ENCODE measurements at regions of chr6 and their contacts with region 1.

Region 1: GRCh38 chr6:148250975-148251685 is 91.5 kb upstream of the SASH1 start:
- DNase-seq: peak; percentile 37
- ATAC-seq: peak; percentile 63
- H3K4me3 ChIP-seq: no peak overlapping the region
- H3K27ac ChIP-seq: no peak overlapping the region
- H3K4me1 ChIP-seq: no peaks in the 10 kb centered on the region
- H3K27me3 ChIP-seq: no peaks in the 10 kb centered on the region
- CTCF ChIP-seq: peak; percentile 56
- EP300 ChIP-seq: no peak
- POLR2A ChIP-seq: no peak
- RAD21 ChIP-seq: no peak

Region 2: GRCh38 chr6:148177589-148178233 is 73.4 kb before region 1 on chr6:
- CTCF ChIA-PET with region 1: interaction called, 3 read pairs
- POLR2A ChIA-PET with region 1: no interaction called
- in situ Hi-C with region 1: no loop called
- intact Hi-C with region 1: loop called (anchors 1 kb)
- DNase-seq: peak; percentile 30
- ATAC-seq: peak; percentile 68
- H3K4me3 ChIP-seq: no peak overlapping the region
- H3K27ac ChIP-seq: no peak overlapping the region
- H3K4me1 ChIP-seq: peaks cover 7% of the 10 kb centered on the region; the same call in 1 of the 2 replicates
- H3K27me3 ChIP-seq: no peaks in the 10 kb centered on the region
- CTCF ChIP-seq: peak; percentile 87
- EP300 ChIP-seq: no peak
- POLR2A ChIP-seq: no peak
- RAD21 ChIP-seq: peak; percentile 60

Region 3: GRCh38 chr6:148263010-148263409 is 11.9 kb after region 1 on chr6:
- CTCF ChIA-PET with region 1: no interaction called
- POLR2A ChIA-PET with region 1: no interaction called
- in situ Hi-C with region 1: no loop called
- intact Hi-C with region 1: no loop called
- DNase-seq: no peak
- ATAC-seq: no peak
- H3K4me3 ChIP-seq: no peak overlapping the region
- H3K27ac ChIP-seq: no peak overlapping the region
- H3K4me1 ChIP-seq: no peaks in the 10 kb centered on the region
- H3K27me3 ChIP-seq: 0 out of 5 replicates have a peak, but pooled peaks cover 0 to 4% of the 10 kb centered on the region in 2 experiments
- CTCF ChIP-seq: no peak
- EP300 ChIP-seq: no peak
- POLR2A ChIP-seq: no peak
- RAD21 ChIP-seq: no peak

Measured in HepG2 (cell line).